Naive thymus-derived CD4-positive, alpha-beta T cell (primary cell): ENCODE measurements at regions of chr12 and their contacts with region 1.

Region 1: DNA sequence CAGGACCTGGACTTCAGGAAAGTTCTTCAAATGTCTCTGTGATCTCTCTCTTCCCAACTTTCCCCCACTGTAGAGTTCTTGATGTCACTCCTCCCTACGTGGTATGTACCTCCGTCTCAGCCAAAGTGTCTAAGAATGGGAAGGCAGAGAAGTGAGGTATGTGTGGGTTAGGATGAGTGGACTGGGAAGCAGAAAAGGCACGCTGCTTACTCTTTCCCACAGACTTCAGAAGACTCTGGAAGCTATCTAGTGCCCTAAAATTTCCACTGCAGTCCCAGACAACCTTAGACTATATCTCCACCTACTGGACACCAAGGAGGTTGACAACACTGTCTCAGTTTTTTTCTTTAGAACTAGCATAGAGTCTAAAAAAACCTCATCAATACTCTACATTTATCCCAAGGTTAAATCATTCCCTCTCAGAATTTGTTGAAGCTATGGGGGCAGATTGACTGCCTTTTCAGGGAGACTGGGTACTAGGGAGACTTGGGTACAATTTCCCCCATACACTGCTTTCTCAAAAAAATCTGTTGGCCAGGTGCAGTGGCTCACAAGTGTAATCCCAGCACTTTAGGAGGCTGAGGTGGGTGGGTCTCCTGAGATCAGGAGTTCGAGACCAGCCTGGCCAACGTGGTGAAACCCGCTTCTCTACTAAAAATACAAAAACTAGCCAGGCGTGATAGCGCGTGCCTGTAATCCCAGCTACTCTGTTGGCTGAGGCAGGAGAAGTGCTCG is 20.6 kb upstream of the ITGA5 start:
- DNase-seq: peak in 7 of 9 donors; percentile 24 to 68 (median 62)
- ATAC-seq: peak; percentile 97
- H3K4me3 ChIP-seq: no peak overlapping the region
- H3K4me3 Mint-ChIP-seq: peak overlapping the region in 2 of 10 donors; percentile 14 to 21
- H3K27ac ChIP-seq: no peak overlapping the region
- H3K27ac Mint-ChIP-seq: peak overlapping the region in 7 of 9 donors; percentile 9 to 78 (median 29)
- H3K4me1 ChIP-seq: peaks cover 0 to 3% of the 10 kb centered on the region in 2 donors
- H3K4me1 Mint-ChIP-seq: peaks cover 4 to 24% (median 6%) of the 10 kb centered on the region in 7 donors
- H3K27me3 ChIP-seq: no peaks in the 10 kb centered on the region
- H3K27me3 Mint-ChIP-seq: peaks cover 0 to 32% (median 0%) of the 10 kb centered on the region in 5 donors

Region 2: DNA sequence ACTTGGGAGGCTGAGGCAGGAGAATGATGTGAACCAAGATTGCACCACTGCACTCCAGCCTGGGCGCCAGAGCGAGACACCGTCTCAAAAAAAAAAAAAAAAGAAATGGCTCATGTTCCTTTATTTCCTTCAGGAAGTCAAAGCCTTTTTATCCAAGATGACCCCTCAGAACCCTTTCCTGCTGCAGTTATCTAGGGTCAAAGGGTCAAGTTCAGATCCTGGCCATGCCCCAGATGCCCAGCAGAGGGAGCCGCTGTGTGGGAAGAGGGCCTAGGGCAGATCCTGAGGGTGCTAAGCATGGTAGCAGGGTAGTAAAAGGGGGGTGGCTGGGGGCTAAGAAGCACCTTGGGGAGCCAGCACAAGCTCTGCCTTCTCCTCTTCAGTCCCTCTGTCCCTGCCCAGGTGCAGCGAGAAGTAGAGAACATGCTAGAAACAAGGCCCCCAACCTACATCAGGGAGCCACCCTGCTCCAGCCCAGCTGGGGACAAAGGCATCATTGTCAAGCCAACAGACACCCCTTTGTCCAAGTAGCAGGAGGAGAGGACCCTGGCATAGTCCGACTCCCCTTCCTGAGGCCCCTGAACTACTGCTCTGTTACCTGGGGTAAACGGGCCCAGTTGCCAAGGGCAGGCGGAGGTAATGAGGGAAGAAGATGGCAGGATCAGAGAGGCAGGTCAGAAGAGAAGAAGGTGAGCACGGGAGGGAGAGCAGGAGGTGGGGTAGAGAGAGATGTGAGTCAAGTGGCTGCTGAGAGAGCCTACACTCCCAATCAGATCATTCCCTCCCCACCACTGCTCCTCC is 145.3 kb before region 1 on chr12:
- CTCF ChIA-PET with region 1: interaction called, 5 read pairs
- POLR2A ChIA-PET with region 1: no interaction called
- intact Hi-C with region 1: loop called in 1 of 2 experiments (anchors 5 kb)
- DNase-seq: peak in 8 of 9 donors; percentile 22 to 70 (median 44)
- ATAC-seq: peak; percentile 76
- H3K4me3 ChIP-seq: no peak overlapping the region
- H3K4me3 Mint-ChIP-seq: no peak overlapping the region
- H3K27ac ChIP-seq: no peak overlapping the region
- H3K27ac Mint-ChIP-seq: no peak overlapping the region
- H3K4me1 ChIP-seq: no peaks in the 10 kb centered on the region
- H3K4me1 Mint-ChIP-seq: peaks cover 5 to 22% (median 6%) of the 10 kb centered on the region in 7 donors
- H3K27me3 ChIP-seq: no peaks in the 10 kb centered on the region
- H3K27me3 Mint-ChIP-seq: peaks cover 0 to 20% (median 5%) of the 10 kb centered on the region in 5 donors

Region 3: DNA sequence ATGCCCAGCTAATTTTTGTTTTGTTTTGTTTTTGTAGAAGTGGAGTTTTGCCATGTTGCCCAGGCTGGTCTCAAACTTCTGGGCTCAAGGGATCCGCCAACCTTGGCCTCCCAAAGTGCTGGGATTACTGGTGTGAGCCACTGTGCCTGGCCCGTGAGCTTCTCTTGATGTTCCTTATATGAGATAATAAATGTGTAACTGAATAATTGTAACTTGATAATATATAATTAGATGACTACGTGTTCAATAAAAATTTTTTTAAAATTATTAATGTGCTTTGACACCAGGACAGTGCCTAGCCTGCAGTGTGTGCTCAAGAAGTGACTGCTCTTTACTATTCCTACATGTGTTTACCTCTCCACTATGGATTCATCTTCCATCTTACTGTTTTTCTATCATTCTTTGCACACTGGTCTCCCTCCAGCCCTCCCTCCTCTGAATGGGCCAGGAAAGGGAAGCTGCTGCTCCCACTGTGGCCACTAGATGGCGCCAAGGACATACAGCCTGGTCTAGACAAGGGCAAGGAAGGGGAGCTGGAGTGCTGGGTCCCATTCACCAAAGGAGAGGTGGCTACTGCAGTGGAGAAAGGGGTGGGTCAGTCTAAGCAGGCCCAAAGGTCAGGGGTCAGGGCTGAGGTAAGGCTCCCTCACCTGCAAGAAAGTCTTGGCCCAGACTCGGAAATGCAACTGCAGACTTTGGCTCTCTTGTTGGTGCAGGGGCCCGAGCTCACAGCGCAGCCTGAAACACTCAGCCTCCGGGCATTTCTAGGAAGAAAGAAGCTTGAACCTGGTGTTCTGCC is 40.5 kb before region 1 on chr12:
- CTCF ChIA-PET with region 1: interaction called, 452 read pairs
- POLR2A ChIA-PET with region 1: interaction called, 71 read pairs
- intact Hi-C with region 1: loop called (anchors 1 kb)
- DNase-seq: peak; percentile 76 to 94 (median 84)
- ATAC-seq: peak; percentile 96
- H3K4me3 ChIP-seq: no peak overlapping the region
- H3K4me3 Mint-ChIP-seq: no peak overlapping the region
- H3K27ac ChIP-seq: no peak overlapping the region
- H3K27ac Mint-ChIP-seq: peak overlapping the region in 7 of 9 donors; percentile 5 to 74 (median 52)
- H3K4me1 ChIP-seq: no peaks in the 10 kb centered on the region
- H3K4me1 Mint-ChIP-seq: peaks cover 13 to 31% (median 16%) of the 10 kb centered on the region in 7 donors
- H3K27me3 ChIP-seq: no peaks in the 10 kb centered on the region
- H3K27me3 Mint-ChIP-seq: no peaks in the 10 kb centered on the region

Region 4: GRCh38 chr12:54404061-54405004 is 35.4 kb before region 1 on chr12:
- CTCF ChIA-PET with region 1: interaction called, 452 read pairs
- POLR2A ChIA-PET with region 1: interaction called, 71 read pairs
- intact Hi-C with region 1: loop called (anchors 1 kb)
- DNase-seq: peak; percentile 44 to 72 (median 59)
- ATAC-seq: peak; percentile 74
- H3K4me3 ChIP-seq: no peak overlapping the region
- H3K4me3 Mint-ChIP-seq: peak overlapping the region in 3 of 10 donors; percentile 23 to 48 (median 25)
- H3K27ac ChIP-seq: peak overlapping the region; percentile 54
- H3K27ac Mint-ChIP-seq: peak overlapping the region; percentile 36 to 98 (median 93)
- H3K4me1 ChIP-seq: peaks cover 8 to 17% of the 10 kb centered on the region in 2 donors
- H3K4me1 Mint-ChIP-seq: peaks cover 28 to 54% (median 41%) of the 10 kb centered on the region in 7 donors
- H3K27me3 ChIP-seq: no peaks in the 10 kb centered on the region
- H3K27me3 Mint-ChIP-seq: no peaks in the 10 kb centered on the region

Region 5: DNA sequence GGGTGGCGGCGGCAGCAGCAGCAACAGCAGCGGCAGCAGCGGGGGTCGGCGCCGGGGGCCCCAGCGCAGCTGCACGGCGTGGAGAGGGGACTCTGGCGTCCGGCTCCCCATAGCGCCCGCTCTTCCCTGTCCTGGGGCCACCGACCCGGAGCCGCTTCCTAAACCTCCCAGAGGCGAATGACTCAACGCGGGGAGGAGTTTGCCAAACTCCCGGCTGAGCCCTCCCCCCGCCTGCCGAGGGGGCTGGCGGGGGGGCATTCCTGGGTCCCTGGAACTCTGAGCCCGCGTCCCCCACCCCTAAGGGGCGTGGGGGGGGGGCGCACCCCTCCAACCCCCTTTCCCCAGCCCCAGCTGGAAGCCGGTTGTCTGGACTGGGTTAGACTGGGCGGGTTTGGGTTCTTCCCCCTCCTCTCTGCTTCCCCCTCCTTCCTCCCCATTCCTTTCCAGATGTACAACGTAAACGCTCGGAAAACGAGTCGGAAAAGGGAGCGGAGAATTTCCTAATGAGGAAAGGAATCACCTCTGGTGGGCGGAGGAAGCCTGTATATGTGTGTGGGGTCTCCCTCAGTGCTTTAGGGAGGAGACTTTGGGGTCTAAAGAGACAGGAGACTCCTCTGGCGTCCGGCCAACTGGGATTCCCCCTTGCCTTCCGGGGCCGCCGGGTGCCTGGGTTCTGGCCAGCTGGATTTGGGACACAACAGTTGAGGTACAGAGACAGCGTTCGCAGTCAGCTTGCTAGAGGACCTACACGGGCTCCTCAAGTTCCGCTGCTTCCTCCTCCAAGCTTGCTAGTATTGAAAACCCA is 20.4 kb before region 1 on chr12 and contains the start of gene ITGA5:
- CTCF ChIA-PET with region 1: interaction called, 111 read pairs
- POLR2A ChIA-PET with region 1: interaction called, 27 read pairs
- intact Hi-C with region 1: loop called (anchors 1 to 2 kb)
- DNase-seq: peak in 4 of 9 donors; percentile 16 to 53 (median 28)
- ATAC-seq: peak; percentile 48
- H3K4me3 ChIP-seq: peak within 1 kb of the TSS; percentile 86
- H3K4me3 Mint-ChIP-seq: peak within 1 kb of the TSS; percentile 78 to 98 (median 94)
- H3K27ac ChIP-seq: peak within 1 kb of the TSS; percentile 96
- H3K27ac Mint-ChIP-seq: peak within 1 kb of the TSS; percentile 87 to 100 (median 97)
- H3K4me1 ChIP-seq: peaks cover 44 to 49% of the 10 kb centered on the region in 2 donors
- H3K4me1 Mint-ChIP-seq: peaks cover 34 to 63% (median 52%) of the 10 kb centered on the region in 7 donors
- H3K27me3 ChIP-seq: no peaks in the 10 kb centered on the region
- H3K27me3 Mint-ChIP-seq: peaks cover 0 to 24% (median 0%) of the 10 kb centered on the region in 5 donors
- total RNA-seq, gene ITGA5: 73.9 to 169 (median 145) TPM